ENCODE measurements at regions of chr3 and their contacts with region 1.

Region 1: GRCh38 chr3:196590279-196590678 is 21.8 kb downstream of the FBXO45 start:
- DNase-seq: no peak
- H3K4me3 ChIP-seq: no peak overlapping the region
- H3K27ac ChIP-seq: no peak overlapping the region
- H3K4me1 ChIP-seq: no peaks in the 10 kb centered on the region
- H3K27me3 ChIP-seq: no peaks in the 10 kb centered on the region
- CTCF ChIP-seq: no peak

Region 2: GRCh38 chr3:196650740-196651311 is 60.5 kb after region 1 on chr3:
- CTCF ChIA-PET with region 1: no interaction called
- dilution Hi-C with region 1: loop called (anchors 5 kb)
- in situ Hi-C with region 1: no loop called
- intact Hi-C with region 1: no loop called
- DNase-seq: peak; percentile 92
- H3K4me3 ChIP-seq: no peak overlapping the region
- H3K27ac ChIP-seq: no peak overlapping the region
- H3K4me1 ChIP-seq: peaks cover 28% of the 10 kb centered on the region
- H3K27me3 ChIP-seq: no peaks in the 10 kb centered on the region
- CTCF ChIP-seq: no peak